ENCODE measurements at regions of chr1 and their contacts with region 1.

Region 1: GRCh38 chr1:67407498-67407897 is 22.7 kb downstream of the SERBP1 start:
- DNase-seq: no peak
- H3K4me3 ChIP-seq: no peak overlapping the region
- H3K4me3 Mint-ChIP-seq: no peak overlapping the region
- H3K27ac Mint-ChIP-seq: no peak overlapping the region
- H3K4me1 ChIP-seq: no peaks in the 10 kb centered on the region
- H3K4me1 Mint-ChIP-seq: no peaks in the 10 kb centered on the region
- H3K27me3 ChIP-seq: no peaks in the 10 kb centered on the region
- H3K27me3 Mint-ChIP-seq: no peaks in the 10 kb centered on the region
- CTCF ChIP-seq: no peak

Region 2: DNA sequence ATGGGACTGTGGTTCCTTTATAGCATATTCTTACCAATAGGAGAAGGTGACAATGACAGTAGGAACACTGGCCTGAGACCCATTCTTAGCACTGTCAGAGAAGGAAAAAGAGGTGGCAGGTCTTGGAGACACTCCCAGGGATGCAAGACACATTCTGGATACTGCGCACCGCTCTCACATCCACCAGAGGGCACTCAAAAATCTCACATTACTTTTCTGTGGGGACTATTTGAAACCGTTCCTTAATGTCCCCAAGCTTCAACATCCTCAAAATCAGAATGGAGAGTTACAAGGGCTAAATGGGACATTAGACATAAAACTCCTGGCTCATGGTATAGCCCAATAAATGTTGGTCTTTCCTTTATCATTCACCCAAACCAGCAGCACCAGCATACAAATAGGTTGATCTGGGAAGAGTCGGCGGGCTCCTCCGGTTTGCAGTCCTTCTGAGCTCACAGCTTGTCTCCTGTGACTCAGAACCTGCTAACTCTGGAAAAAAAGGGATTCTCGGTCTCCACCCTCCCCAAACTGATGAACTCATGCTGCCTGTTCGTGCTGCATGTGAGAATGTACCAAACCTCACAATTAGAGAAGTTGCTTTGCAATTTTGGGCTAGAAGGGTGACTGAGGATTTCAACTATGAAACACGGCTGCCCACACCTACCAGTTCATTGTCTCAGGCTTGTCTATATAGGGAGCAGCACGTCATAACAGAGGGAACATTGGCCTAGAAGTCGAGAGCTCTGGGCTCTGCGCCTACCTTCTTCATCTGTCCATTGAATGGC is 59.6 kb before region 1 on chr1:
- CTCF ChIA-PET with region 1: no interaction called
- POLR2A ChIA-PET with region 1: no interaction called
- intact Hi-C with region 1: loop called (anchors 5 kb)
- DNase-seq: peak; percentile 36 to 38
- H3K4me3 ChIP-seq: no peak overlapping the region
- H3K4me3 Mint-ChIP-seq: no peak overlapping the region
- H3K27ac Mint-ChIP-seq: no peak overlapping the region
- H3K4me1 ChIP-seq: no peaks in the 10 kb centered on the region
- H3K4me1 Mint-ChIP-seq: no peaks in the 10 kb centered on the region
- H3K27me3 ChIP-seq: no peaks in the 10 kb centered on the region
- H3K27me3 Mint-ChIP-seq: no peaks in the 10 kb centered on the region
- CTCF ChIP-seq: peak; percentile 44 to 68

Region 3: DNA sequence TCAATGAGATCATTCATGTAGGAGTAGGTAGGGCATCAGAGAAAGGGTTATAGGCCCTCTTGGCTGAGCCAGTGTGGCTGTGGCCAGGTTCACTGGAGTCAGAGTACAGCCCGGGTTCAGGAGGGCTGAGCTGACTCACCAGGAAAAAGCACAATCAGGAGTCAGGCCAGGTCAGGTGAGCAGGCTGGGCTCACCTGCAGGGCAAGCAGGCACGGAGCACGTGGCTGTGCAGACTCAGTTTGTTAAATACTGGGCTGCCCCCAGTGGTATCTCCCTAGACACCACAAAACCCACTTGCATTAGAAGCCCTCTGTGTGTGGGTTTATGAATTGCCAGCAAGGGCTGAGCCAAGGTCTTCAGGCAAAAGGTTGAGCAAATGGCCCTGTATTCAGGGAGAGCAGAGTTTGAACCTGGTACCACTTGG is 144.8 kb after region 1 on chr1:
- CTCF ChIA-PET with region 1: no interaction called
- POLR2A ChIA-PET with region 1: no interaction called
- intact Hi-C with region 1: no loop called
- DNase-seq: peak in 1 of 2 experiments; percentile 46
- H3K4me3 ChIP-seq: no peak overlapping the region
- H3K4me3 Mint-ChIP-seq: no peak overlapping the region
- H3K27ac Mint-ChIP-seq: no peak overlapping the region
- H3K4me1 ChIP-seq: peaks cover 20% of the 10 kb centered on the region
- H3K4me1 Mint-ChIP-seq: peaks cover 25% of the 10 kb centered on the region
- H3K27me3 ChIP-seq: no peaks in the 10 kb centered on the region
- H3K27me3 Mint-ChIP-seq: no peaks in the 10 kb centered on the region
- CTCF ChIP-seq: no peak

Region 4: GRCh38 chr1:67664048-67664447 is 256.6 kb after region 1 on chr1:
- CTCF ChIA-PET with region 1: no interaction called
- POLR2A ChIA-PET with region 1: no interaction called
- intact Hi-C with region 1: no loop called
- DNase-seq: peak in 1 of 2 experiments; percentile 26
- H3K4me3 ChIP-seq: no peak overlapping the region
- H3K4me3 Mint-ChIP-seq: peak overlapping the region; percentile 11
- H3K27ac Mint-ChIP-seq: peak overlapping the region; percentile 36
- H3K4me1 ChIP-seq: peaks cover 14% of the 10 kb centered on the region
- H3K4me1 Mint-ChIP-seq: peaks cover 17% of the 10 kb centered on the region
- H3K27me3 ChIP-seq: no peaks in the 10 kb centered on the region
- H3K27me3 Mint-ChIP-seq: no peaks in the 10 kb centered on the region
- CTCF ChIP-seq: no peak

Measured in Caco-2 (cell line).